CD8-positive, alpha-beta T cell (primary cell): ENCODE measurements at regions of chr11 and their contacts with region 1.

Region 1: DNA sequence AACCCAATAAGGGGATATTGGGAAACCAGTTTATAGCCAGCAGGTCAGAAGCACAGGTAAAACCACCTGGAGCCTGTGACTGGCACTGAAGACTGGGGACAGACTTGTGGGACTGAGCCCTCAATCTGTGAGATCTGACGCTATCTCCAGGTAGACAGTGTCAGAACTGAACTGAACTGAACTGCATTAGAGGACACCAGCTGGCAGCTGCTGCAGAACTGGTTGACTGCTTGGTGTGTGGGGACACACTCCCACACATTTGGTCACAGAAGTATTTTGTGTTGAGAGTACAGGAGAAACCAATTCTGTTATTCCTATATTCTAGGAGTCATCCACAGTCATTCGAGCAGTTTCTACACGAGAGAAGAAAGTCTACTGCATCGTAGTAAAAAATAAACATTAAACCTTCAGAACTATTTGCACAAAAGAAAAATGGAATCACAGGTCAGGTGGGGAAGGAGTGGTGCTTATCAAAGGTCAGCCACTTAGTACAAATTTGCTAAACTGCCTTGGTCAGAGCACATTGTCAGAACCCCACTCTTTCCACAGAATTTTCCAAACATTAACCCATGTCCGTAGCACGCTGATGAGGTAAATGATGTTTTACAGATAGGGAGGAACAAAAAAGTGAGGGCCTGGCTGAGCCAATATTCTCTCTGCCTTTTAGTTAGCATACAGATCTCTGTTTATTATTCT is 77.2 kb downstream of the SIK3 start:
- DNase-seq: no peak
- ATAC-seq: no peak
- H3K4me3 ChIP-seq: no peak overlapping the region
- H3K4me3 Mint-ChIP-seq: no peak overlapping the region
- H3K27ac ChIP-seq: no peak overlapping the region
- H3K27ac Mint-ChIP-seq: peak overlapping the region; percentile 12
- H3K4me1 ChIP-seq: peaks cover 36% of the 10 kb centered on the region
- H3K4me1 Mint-ChIP-seq: peaks cover 68% of the 10 kb centered on the region
- H3K27me3 ChIP-seq: no peaks in the 10 kb centered on the region
- H3K27me3 Mint-ChIP-seq: no peaks in the 10 kb centered on the region
- CTCF ChIP-seq: no peak

Region 2: DNA sequence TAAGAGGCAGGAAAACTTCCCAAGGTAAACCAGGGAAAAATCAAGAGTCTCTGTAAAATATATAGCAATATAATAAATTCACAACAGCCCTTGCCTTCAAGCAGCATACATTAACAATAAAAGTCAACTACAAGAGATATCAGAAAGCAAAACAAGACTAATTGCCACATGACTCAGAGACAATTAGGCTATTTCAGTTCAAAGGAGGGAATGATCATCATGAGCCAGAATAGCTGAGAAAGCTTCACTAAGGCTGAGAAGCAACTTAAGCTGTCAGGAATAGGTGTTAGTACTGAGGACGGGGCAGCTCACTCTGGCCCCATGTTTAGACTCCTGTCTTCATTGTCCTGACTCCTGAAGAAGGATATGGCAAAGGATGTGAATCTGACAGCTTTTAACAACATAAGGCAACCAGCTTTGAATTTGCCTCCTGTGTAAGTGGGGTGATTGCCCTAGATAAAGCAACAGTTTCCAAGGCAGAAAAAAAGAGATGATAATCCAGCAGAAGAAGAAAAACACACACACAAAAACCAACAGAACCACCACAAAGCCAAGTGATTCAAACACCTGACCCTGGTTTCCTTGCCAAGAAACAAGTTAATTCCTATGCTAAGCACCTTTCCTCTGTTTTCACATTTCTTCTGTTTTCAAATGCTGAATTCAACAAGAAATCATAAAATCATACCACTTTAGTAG is 16.4 kb after region 1 on chr11:
- CTCF ChIA-PET with region 1: no interaction called
- POLR2A ChIA-PET with region 1: interaction called, 6 read pairs
- intact Hi-C with region 1: loop called in 1 of 2 experiments (anchors 1 kb)
- DNase-seq: peak in 2 of 9 experiments; percentile 31 to 52
- ATAC-seq: peak; percentile 38
- H3K4me3 ChIP-seq: no peak overlapping the region
- H3K4me3 Mint-ChIP-seq: peak overlapping the region; percentile 46
- H3K27ac ChIP-seq: peak overlapping the region; percentile 11 to 53
- H3K27ac Mint-ChIP-seq: peak overlapping the region; percentile 72
- H3K4me1 ChIP-seq: peaks cover 23% of the 10 kb centered on the region
- H3K4me1 Mint-ChIP-seq: peaks cover 71% of the 10 kb centered on the region
- H3K27me3 ChIP-seq: no peaks in the 10 kb centered on the region
- H3K27me3 Mint-ChIP-seq: no peaks in the 10 kb centered on the region
- CTCF ChIP-seq: no peak